Posterior cingulate gyrus (tissue), 11 donors: ENCODE measurements at regions of chr1 and their contacts with region 1.

Region 1: DNA sequence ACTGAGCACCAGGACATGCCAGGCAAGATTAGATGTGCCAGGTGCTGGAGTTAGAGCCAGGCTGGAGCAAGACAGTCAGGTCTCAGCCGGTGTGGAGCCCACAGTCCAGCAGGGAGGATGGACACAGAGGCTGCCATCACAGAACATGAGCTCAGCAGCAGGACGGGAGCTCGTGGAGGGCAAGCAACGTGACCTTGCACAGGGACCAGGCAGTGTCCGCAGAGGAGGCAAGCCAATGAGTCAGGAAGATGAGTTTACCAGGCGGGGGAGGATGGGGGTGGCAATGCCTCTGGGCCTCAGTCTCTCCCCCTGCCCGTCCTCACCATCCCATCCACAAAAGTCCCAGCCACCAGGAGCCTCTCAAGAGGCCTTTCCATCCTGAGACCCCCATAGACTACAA is 20.7 kb upstream of the ZC3H12A start:
- DNase-seq: peak in 1 of 10 donors; percentile 42

Region 2: DNA sequence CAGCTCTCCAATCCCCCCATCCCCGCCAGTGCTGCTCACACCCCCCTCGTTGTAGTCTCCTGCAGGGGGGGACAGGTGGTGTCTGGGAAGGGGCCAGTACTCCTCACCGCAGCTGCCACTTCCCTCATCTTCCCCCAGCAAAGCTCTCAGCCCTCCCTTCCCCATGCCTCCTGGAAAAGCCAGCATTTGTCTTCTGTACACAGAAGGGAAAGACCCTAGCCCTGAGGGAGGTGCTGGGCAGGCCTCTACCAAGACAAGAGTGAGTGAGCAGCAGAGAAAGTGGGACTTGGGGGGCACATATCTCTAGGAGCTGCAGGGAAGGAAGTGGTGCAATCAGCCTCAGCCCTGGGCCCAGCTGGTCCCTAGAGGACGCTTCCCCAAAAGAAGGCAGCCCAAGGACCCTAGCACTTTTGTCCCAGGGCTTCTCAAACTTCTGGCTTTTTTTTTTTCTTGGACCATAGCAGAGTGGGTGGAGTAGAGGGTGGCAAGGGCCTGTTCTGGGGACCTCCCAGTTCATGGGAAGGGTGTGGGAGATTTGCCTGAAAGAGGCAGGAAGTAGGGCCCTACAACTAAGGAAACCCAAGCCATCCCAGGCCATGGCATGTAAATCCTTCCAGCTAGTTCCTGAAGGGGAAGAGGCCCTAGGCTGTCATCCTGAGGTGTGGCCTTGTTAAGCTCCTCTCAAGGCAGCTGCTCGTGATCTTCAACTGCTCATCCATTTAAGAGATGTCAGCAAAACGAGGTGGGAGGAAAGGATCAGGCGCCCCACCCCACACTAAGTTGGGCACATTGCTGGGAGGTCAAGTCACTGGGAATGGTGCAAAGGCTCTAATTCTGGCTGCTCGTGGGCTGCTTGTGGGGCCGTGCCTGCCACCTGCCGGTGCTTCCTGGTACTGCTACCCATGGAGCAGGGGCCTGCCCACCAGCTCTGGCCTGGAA is 33.3 kb after region 1 on chr1:
- intact Hi-C with region 1: loop called (anchors 1 kb)
- DNase-seq: peak; percentile 49 to 95 (median 76)

Region 3: DNA sequence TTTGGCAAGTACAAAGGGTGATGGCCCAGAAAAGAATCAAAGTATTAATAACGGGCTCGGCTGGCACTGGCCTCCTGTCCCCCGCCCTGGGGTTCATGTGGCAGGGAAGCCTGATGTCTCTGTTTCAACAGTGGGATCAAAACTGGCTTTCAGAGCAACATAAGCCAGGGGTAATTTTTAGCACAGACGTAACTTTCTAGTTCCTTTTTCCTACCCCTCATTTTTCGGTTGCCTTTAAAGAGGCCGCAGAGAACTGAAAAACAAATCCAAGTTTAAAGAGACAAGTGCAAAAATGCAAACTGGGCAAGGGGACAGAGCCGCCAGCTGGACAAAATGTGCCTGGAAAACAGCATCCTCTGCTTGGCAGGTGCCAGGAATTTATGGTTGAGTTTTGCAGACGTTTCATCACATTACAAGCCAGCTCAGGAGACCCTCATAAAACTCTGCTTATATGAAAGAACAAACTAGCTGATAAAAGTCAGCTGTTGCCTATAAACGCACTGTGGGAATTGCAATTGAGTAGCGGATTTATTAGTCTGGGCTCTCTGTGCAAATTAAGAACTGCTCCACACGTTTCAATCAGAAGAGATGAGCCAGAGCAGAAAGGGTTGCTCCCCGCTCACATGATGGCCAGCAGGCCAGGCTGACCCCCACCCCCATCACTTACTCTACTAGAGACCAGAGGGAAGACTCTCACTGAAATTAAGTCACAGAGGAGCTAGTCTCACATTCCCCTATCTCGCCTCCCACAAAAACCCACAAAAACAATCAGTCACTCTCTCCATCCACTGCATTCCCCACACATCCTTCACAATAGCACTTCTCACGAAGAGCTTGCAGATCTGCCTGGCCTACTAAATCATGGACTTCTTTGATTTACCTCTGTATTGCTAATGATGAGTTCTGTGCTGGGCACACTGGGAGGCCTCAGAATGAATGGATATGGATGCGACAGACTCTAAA is 222.9 kb after region 1 on chr1:
- intact Hi-C with region 1: no loop called
- DNase-seq: peak in 1 of 10 donors; percentile 42